Activated T-helper 2 cell treated with anti-CD3 and anti-CD28 coated beads, Interferon-gamma antibody, Interleukin-2, Interleukin-4, amounts not matched to agents 10 μg/mL and 5 μg/mL and 100 μg/mL, durations not matched to agents 14 hours and 24 hours and 36 hours (primary cell): ENCODE measurements at regions of chr15 and their contacts with region 1.

Region 1: DNA sequence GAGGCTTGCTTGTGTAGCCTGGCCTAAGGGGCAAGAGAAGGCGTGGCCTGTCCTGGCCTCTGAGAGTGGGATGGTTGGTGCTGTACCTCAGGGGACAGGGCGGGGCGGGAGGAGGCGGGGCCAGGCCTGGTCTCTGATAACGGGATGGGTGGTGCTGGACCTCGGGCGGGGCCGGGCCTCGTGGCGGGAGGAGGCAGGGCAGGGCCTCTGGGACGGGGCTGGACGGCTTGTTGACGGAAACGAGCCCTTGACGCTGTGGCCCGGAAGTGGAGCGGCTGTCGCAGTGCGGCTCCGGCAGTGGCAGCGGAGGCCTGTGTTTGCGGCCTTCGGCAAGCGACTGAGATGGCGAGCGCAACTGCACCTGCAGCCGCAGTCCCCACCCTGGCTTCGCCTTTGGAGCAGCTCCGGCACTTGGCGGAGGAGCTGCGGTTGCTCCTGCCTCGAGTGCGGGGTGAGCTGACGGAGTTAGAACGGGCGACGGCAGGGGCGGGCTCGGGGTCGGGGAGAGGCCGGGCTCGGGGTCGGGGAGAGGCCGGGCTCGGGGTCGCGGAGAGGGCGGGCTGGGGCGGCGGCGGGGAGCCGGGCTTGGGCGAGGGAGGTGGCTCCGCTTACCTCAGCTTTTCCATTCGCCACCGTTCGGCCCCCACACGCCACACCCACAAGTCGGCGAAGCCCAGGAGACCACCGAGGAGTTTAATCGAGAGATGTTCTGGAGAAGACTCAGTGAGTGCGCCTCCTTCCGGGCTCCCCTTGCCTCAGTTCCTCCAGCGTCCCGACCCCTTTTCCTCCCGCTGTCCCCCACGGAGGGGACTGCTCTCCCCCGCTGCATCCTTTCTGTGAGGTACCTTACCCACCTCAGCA is at the start of gene CCNDBP1:
- DNase-seq: peak; percentile 90
- H3K4me3 Mint-ChIP-seq: peak within 1 kb of the TSS; percentile 92
- H3K27ac Mint-ChIP-seq: peak within 1 kb of the TSS; percentile 92
- H3K4me1 Mint-ChIP-seq: peaks cover 25% of the 10 kb centered on the region
- H3K27me3 Mint-ChIP-seq: no peaks in the 10 kb centered on the region
- total RNA-seq, gene CCNDBP1: 62.9 and 68.1 TPM in 2 replicates

Region 2: DNA sequence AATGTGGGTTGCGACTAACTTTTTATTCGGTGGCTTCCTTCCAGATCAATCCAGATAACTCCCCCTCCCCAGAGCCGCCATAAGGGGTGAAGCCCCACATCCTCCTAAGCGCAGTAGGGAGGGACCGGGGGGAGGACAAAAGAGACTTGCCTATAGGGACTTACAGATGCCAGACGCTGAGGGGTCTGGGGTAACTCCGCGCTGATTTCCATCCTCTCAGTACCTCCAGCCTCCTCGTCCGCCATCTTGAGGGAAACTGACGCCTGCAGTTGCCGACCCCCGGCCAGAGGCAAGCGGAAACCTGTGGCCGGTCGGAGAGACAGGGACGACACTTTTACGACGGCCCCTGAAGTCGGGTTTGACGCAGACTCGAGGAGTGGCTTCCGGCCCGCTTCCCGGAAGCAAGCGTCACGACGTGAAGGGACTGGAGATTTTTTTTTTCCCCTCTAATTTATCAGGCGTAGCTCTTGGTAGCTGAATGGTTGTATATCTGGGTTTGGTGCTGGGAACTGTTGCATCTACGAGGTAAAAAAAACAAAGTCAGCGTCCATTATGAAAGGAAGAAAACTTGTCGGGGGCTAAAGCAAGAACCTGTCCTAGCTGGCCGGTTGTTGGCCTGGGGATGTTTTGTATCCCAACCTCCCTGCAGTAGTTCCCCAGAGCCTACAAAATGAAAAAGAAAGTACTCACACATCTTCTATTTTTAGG is 79.5 kb before region 1 on chr15 and contains the start of gene UBR1:
- intact Hi-C with region 1: loop called (anchors 5 kb)
- DNase-seq: peak; percentile 87
- H3K4me3 Mint-ChIP-seq: peak within 1 kb of the TSS; percentile 98
- H3K27ac Mint-ChIP-seq: peak within 1 kb of the TSS; percentile 96
- H3K4me1 Mint-ChIP-seq: peaks cover 44% of the 10 kb centered on the region
- H3K27me3 Mint-ChIP-seq: no peaks in the 10 kb centered on the region
- total RNA-seq, gene UBR1: 36.0 and 36.7 TPM in 2 replicates

Region 3: GRCh38 chr15:43133430-43134156 is 51.8 kb before region 1 on chr15 and contains the start of gene TMEM62:
- intact Hi-C with region 1: loop called (anchors 5 kb)
- DNase-seq: peak; percentile 60
- H3K4me3 Mint-ChIP-seq: peak within 1 kb of the TSS; percentile 88
- H3K27ac Mint-ChIP-seq: peak within 1 kb of the TSS; percentile 83
- H3K4me1 Mint-ChIP-seq: peaks cover 23% of the 10 kb centered on the region
- H3K27me3 Mint-ChIP-seq: peaks cover 17% of the 10 kb centered on the region
- total RNA-seq, gene TMEM62: 16.1 and 19.7 TPM in 2 replicates

Region 4: DNA sequence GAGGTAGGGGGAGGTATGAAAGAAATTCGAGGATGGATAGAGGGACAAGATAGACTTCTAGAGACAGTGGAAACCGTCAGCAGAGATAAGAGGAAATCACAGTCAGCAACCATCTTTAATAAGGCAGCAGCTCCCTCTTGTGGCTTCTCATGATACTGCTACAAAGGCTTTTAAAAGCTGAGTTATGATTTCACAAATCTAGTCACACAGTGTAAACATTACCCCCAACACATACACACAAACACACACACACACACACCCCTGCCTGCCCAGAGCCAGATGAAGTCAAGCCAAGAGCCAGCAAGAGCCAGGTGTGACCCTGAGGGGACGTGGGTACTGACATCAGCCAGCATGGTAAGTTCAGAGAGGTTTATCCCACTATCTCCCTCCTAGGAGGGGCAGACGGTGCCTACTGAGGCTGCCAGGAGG is 100.2 kb after region 1 on chr15:
- intact Hi-C with region 1: loop called (anchors 1 kb)
- DNase-seq: peak; percentile 34
- H3K4me3 Mint-ChIP-seq: no peak overlapping the region
- H3K27ac Mint-ChIP-seq: no peak overlapping the region
- H3K4me1 Mint-ChIP-seq: peaks cover 2% of the 10 kb centered on the region
- H3K27me3 Mint-ChIP-seq: peaks cover 7% of the 10 kb centered on the region